Caco-2 (cell line): ENCODE measurements at regions of chr18 and their contacts with region 1.

Region 1: DNA sequence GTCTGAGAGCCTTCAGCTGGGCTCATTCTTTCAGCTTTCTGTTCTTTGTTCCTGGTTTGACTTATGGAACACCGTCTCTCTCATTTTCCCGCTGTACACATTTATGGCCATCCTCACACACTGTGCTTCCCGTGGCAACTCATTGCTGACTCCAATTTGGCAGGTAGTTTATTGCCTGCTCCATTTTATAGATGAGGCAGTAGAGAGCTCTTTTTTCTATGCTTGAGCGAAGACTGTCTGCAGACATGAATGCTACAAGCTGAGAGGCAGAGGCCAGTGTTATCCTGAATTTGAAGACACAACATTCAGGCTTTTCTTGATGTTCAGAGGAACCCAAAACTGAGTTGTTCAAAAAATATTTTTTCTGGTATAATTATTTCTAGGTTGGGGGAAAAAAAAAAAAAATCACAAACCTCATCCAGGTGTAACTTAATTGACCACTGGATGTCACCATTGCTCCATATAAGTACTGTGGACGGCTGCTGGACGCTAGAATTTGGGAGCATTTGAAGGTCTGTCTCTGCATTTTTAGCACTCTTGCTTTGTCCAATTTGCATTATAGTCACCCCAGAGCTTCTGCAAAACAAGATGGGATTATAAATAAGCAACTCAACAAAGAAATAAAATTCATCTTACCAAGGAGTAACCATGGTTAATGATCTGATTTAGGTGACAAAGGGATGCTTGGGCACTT is 83.5 kb downstream of the HRH4 start:
- DNase-seq: peak in 1 of 2 experiments; percentile 23
- H3K4me3 ChIP-seq: no peak overlapping the region
- H3K4me3 Mint-ChIP-seq: no peak overlapping the region
- H3K27ac Mint-ChIP-seq: no peak overlapping the region
- H3K4me1 ChIP-seq: no peaks in the 10 kb centered on the region
- H3K4me1 Mint-ChIP-seq: no peaks in the 10 kb centered on the region
- H3K27me3 ChIP-seq: no peaks in the 10 kb centered on the region
- H3K27me3 Mint-ChIP-seq: no peaks in the 10 kb centered on the region
- CTCF ChIP-seq: peak; percentile 20 to 41

Region 2: GRCh38 chr18:24726727-24727492 is 183.0 kb after region 1 on chr18:
- CTCF ChIA-PET with region 1: interaction called, 8 read pairs
- POLR2A ChIA-PET with region 1: no interaction called
- intact Hi-C with region 1: loop called (anchors 1 kb)
- DNase-seq: peak; percentile 35 to 56
- H3K4me3 ChIP-seq: no peak overlapping the region
- H3K4me3 Mint-ChIP-seq: peak overlapping the region; percentile 69
- H3K27ac Mint-ChIP-seq: no peak overlapping the region
- H3K4me1 ChIP-seq: no peaks in the 10 kb centered on the region
- H3K4me1 Mint-ChIP-seq: peaks cover 6% of the 10 kb centered on the region
- H3K27me3 ChIP-seq: no peaks in the 10 kb centered on the region
- H3K27me3 Mint-ChIP-seq: peaks cover 6% of the 10 kb centered on the region
- CTCF ChIP-seq: peak; percentile 45 to 68